HepG2 (cell line): ENCODE measurements at regions of chr6 and their contacts with region 1.

Region 1: DNA sequence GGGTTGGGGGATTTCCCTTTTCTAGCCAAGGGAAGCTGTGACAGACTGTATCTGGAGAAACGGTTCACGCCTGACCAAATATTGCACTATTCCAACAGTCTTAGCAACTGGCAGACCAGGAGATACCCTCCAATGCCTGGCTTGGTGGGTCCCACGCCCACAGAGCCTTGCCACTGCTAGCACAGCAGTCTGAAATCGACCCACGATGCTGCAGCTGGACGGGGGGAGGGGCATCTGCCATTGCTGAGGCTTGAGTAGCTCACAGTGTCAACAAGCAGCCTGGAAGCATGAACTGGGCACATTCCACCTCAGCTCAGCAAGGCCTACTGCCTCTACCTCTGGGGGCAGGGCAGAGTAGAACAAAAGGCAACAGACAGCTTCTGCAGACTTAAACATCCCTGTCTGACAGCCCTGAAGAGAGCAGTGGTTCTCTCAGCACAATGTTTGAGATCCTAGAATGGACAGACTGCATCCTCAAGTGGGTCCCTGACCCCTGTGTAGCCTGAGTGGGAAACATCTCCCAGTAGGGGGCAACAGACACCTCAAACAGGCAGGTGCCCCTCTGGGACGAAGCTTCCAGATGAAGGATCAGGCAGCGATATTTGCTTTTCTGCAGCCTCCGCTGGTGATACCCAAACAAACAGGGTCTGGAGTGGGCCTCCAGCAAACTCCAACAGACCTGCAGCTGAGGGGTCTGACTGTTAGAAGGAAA is 89.9 kb upstream of the ECI2 start:
- DNase-seq: peak; percentile 27
- ATAC-seq: peak; percentile 82
- H3K4me3 ChIP-seq: no peak overlapping the region
- H3K27ac ChIP-seq: no peak overlapping the region
- H3K4me1 ChIP-seq: no peaks in the 10 kb centered on the region
- H3K27me3 ChIP-seq: peaks cover 2% of the 10 kb centered on the region in 2 experiments; a peak in 2 of 5 replicates
- CTCF ChIP-seq: peak; percentile 42
- EP300 ChIP-seq: no peak
- POLR2A ChIP-seq: no peak
- RAD21 ChIP-seq: no peak

Region 2: DNA sequence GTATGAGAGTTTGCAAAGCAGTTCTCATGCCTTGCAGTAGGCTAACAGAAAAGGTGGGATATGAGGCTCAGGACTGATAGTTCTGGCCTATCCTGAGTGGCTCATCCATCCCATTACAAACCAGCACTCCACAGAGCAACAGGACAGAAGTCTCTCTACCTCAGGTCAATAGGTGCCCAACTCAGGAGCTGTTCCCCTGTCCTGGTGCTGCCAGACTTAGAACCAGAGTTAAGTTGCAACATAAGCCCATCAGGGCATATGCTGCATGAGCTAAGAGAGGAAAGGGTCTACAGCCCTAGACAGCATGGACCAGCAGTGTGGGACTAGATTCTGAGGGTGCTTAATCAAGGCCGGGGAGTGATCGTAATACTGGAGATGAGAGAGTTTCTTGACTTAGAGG is 14.8 kb after region 1 on chr6:
- CTCF ChIA-PET with region 1: no interaction called
- POLR2A ChIA-PET with region 1: no interaction called
- in situ Hi-C with region 1: no loop called
- intact Hi-C with region 1: no loop called
- DNase-seq: no peak
- ATAC-seq: no peak; the same call in 2 of the 3 replicates
- H3K4me3 ChIP-seq: no peak overlapping the region
- H3K27ac ChIP-seq: no peak overlapping the region
- H3K4me1 ChIP-seq: no peaks in the 10 kb centered on the region
- H3K27me3 ChIP-seq: no peaks in the 10 kb centered on the region; a peak in 1 of 5 replicates
- CTCF ChIP-seq: no peak
- EP300 ChIP-seq: no peak
- POLR2A ChIP-seq: no peak
- RAD21 ChIP-seq: no peak

Region 3: GRCh38 chr6:4281341-4282293 is 56.3 kb after region 1 on chr6:
- CTCF ChIA-PET with region 1: no interaction called
- POLR2A ChIA-PET with region 1: no interaction called
- in situ Hi-C with region 1: no loop called
- intact Hi-C with region 1: no loop called
- DNase-seq: no peak
- ATAC-seq: peak; percentile 67
- H3K4me3 ChIP-seq: no peak overlapping the region
- H3K27ac ChIP-seq: no peak overlapping the region
- H3K4me1 ChIP-seq: no peaks in the 10 kb centered on the region
- H3K27me3 ChIP-seq: peaks cover 8 to 67% of the 10 kb centered on the region in 2 experiments; a peak in 4 of 5 replicates
- CTCF ChIP-seq: peak; percentile 58
- EP300 ChIP-seq: no peak
- POLR2A ChIP-seq: no peak
- RAD21 ChIP-seq: no peak

Region 4: GRCh38 chr6:4964675-4965561 is 739.6 kb after region 1 on chr6:
- CTCF ChIA-PET with region 1: no interaction called
- POLR2A ChIA-PET with region 1: no interaction called
- in situ Hi-C with region 1: loop called (anchors 10 kb)
- intact Hi-C with region 1: no loop called
- DNase-seq: no peak
- ATAC-seq: peak; percentile 85
- H3K4me3 ChIP-seq: peak overlapping the region; percentile 27 to 66 (median 33); a peak in 5 of 6 replicates
- H3K27ac ChIP-seq: no peak overlapping the region
- H3K4me1 ChIP-seq: peaks cover 22% of the 10 kb centered on the region
- H3K27me3 ChIP-seq: peaks cover 7 to 48% of the 10 kb centered on the region in 2 experiments; a peak in 4 of 5 replicates
- CTCF ChIP-seq: no peak
- EP300 ChIP-seq: no peak
- POLR2A ChIP-seq: no peak
- RAD21 ChIP-seq: no peak